PC-9 (cell line): ENCODE measurements at regions of chr5 and their contacts with region 1.

Region 1: DNA sequence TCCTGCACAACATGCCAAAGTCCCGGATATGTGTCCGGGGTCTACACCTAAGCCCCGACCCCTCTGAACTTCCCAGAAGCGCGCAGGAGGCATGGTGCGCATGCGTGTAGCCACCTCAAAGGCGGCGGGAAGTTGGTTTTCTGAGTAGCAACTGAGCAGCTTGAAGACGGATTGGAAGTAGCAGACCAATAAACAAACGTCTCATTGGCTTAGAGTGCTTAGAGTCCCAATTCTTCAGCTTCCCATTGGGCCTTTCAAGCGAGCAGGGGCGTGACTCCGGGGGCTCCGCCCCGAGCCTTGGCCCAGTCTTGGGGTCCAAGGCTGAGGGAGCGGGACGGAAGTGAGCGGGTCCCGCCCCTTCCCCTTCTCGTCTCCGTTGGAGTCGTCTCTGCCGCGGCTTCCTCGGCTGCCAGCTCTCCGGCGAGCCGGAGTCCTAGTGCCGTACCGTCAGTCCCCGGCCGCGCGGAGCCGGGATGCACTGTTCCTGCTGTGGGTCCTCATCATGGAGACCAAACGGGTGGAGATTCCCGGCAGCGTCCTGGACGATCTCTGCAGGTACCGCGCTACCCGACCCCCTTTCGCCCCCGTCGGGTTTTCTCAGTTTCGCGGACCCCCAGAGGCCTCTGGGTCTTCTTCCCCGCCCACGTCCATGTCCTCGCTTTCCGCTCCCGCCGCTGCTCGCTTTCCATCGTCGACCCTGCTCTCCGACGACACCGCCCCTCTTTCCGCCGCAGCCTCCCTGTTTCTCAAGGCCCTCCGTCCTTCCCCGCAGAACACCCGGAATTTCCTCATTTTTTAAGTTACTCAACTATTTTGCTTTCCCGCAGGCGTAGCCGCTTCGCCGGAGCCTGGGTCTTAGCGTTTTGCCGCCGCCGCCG is at the start of gene DCP2:
- DNase-seq: peak; percentile 94 to 96
- H3K4me3 ChIP-seq: peak within 1 kb of the TSS; percentile 70
- H3K27ac ChIP-seq: peak within 1 kb of the TSS; percentile 63
- H3K4me1 ChIP-seq: peaks cover 33% of the 10 kb centered on the region
- H3K27me3 ChIP-seq: no peaks in the 10 kb centered on the region
- CTCF ChIP-seq: no peak
- total RNA-seq, gene DCP2: 40.0 and 45.6 TPM in 2 replicates

Region 2: DNA sequence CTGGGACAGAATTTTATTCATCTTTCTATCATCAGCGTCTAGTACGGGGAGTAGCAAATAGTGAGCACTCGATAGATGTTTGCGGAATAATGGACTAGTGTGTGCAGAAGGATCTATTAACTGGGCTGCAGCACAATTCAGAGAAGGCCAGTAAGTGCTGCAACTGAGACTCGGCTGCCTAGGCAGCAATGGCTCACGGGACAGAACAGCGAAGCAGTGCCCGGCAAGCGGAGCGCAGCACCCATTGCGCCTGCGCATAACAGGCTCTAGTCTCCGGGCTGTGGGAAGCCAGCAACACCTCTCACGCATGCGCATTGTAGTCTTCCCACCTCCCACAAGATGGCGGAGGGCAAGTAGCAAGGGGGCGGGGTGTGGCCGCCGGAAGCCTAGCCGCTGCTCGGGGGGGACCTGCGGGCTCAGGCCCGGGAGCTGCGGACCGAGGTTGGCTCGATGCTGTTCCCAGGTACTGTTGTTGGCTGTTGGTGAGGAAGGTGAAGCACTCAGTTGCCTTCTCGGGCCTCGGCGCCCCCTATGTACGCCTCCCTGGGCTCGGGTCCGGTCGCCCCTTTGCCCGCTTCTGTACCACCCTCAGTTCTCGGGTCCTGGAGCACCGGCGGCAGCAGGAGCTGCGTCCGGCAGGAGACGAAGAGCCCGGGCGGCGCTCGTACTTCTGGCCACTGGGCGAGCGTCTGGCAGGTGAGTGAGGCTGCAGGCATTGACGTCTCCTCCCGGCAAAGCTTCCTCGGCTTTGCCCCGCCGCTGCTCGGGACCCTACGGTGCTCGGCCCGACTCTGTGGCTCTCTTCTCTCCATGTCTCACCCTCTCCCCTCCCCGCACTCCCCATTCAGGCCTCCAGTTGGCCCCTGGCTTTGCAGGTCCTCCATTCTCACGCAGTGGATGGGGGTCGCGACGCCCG is 269.2 kb before region 1 on chr5:
- CTCF ChIA-PET with region 1: no interaction called
- POLR2A ChIA-PET with region 1: no interaction called
- intact Hi-C with region 1: loop called (anchors 5 kb)
- DNase-seq: peak; percentile 91 to 95
- H3K4me3 ChIP-seq: peak overlapping the region; percentile 71
- H3K27ac ChIP-seq: peak overlapping the region; percentile 52
- H3K4me1 ChIP-seq: peaks cover 16% of the 10 kb centered on the region
- H3K27me3 ChIP-seq: no peaks in the 10 kb centered on the region
- CTCF ChIP-seq: no peak

Region 3: GRCh38 chr5:112860929-112861637 is 115.6 kb before region 1 on chr5 and contains the start of gene SRP19:
- CTCF ChIA-PET with region 1: no interaction called
- POLR2A ChIA-PET with region 1: interaction called, 5 read pairs
- intact Hi-C with region 1: loop called (anchors 5 kb)
- DNase-seq: peak; percentile 88 to 93
- H3K4me3 ChIP-seq: peak within 1 kb of the TSS; percentile 84
- H3K27ac ChIP-seq: peak within 1 kb of the TSS; percentile 69
- H3K4me1 ChIP-seq: peaks cover 20% of the 10 kb centered on the region
- H3K27me3 ChIP-seq: no peaks in the 10 kb centered on the region
- CTCF ChIP-seq: no peak
- total RNA-seq, gene SRP19: 26.8 and 34.4 TPM in 2 replicates

Region 4: DNA sequence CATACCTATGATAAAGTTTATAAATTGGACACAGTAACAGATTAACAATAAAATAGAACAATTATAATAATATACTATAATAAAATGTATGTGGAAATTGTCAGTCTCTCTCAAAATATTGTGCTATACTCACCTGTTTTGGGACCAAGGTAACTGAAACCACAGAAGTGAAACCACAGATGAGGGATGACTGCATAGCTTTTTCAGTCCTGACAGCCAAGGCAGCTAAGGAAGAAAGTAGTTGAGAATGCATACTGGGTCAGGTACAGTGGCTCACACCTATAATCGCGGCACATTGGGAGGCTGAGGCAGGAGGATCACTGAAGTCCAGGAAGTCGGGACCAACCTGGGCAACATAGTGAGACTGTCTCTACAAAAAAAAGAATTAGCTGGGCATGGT is 106.7 kb before region 1 on chr5:
- CTCF ChIA-PET with region 1: interaction called, 11 read pairs
- POLR2A ChIA-PET with region 1: no interaction called
- intact Hi-C with region 1: loop called (anchors 5 kb)
- DNase-seq: no peak
- H3K4me3 ChIP-seq: no peak overlapping the region
- H3K27ac ChIP-seq: no peak overlapping the region
- H3K4me1 ChIP-seq: no peaks in the 10 kb centered on the region
- H3K27me3 ChIP-seq: no peaks in the 10 kb centered on the region
- CTCF ChIP-seq: no peak

Region 5: GRCh38 chr5:112878760-112879159 is 97.9 kb before region 1 on chr5:
- CTCF ChIA-PET with region 1: no interaction called
- POLR2A ChIA-PET with region 1: interaction called, 11 read pairs
- intact Hi-C with region 1: loop called (anchors 5 kb)
- DNase-seq: peak; percentile 43 to 90
- H3K4me3 ChIP-seq: no peak overlapping the region; the same call in 1 of the 2 replicates
- H3K27ac ChIP-seq: peak overlapping the region; percentile 48
- H3K4me1 ChIP-seq: peaks cover 26% of the 10 kb centered on the region
- H3K27me3 ChIP-seq: no peaks in the 10 kb centered on the region
- CTCF ChIP-seq: no peak

Region 6: DNA sequence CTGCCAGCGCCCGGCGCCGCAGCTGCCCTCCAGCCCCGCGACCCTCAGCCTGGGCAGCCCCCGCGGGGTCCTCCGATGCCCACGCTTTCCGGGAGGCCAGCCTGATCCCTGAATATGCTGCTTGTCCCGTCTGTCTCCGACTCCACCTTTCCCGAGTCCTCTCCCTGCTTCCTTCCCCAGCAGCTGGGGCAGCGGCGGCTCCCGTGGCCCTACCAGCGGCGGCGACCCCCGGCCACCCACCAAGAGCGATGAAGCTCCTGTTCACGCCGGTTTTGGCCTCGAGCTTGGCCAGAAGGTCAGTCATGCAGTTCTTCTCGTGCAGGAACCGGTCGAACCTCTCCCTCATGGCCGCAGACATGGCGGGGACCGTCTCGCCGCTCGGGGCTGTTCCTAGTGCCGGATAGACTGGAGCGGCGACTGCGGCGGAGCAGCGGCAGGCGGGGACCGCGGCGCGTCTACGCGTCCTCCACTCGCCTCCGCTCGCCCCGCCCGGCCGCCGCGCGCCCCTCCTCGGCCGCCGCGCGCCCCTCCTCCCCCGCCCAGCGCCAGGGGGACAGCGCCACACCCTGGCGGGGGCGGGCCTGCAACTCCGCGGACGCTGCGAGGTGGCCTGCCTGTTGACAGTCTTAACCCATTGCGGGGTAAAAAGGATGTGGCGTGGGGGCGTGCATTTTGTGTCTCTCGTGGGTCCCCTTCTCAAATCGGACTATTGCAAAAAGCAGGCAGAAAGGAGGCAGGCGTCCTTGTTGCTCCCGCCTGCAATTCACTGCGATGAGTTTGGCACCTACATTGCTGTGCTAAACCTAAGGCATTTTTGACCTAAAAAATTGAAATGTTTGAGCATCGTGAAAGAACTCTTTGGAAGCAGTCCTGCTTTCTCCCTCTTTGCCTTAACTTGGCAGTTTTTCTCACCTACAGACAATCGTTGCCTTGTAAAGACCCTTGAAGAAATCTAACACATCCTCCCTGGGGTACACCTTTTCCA is 54.5 kb before region 1 on chr5 and contains the start of gene REEP5:
- CTCF ChIA-PET with region 1: no interaction called
- POLR2A ChIA-PET with region 1: no interaction called
- intact Hi-C with region 1: loop called (anchors 1 kb)
- DNase-seq: peak; percentile 66 to 85
- H3K4me3 ChIP-seq: peak within 1 kb of the TSS; percentile 97
- H3K27ac ChIP-seq: peak within 1 kb of the TSS; percentile 53
- H3K4me1 ChIP-seq: peaks cover 7% of the 10 kb centered on the region; the same call in 1 of the 2 replicates
- H3K27me3 ChIP-seq: no peaks in the 10 kb centered on the region
- CTCF ChIP-seq: peak; percentile 57
- total RNA-seq, gene REEP5: 45.2 and 53.6 TPM in 2 replicates

Region 7: DNA sequence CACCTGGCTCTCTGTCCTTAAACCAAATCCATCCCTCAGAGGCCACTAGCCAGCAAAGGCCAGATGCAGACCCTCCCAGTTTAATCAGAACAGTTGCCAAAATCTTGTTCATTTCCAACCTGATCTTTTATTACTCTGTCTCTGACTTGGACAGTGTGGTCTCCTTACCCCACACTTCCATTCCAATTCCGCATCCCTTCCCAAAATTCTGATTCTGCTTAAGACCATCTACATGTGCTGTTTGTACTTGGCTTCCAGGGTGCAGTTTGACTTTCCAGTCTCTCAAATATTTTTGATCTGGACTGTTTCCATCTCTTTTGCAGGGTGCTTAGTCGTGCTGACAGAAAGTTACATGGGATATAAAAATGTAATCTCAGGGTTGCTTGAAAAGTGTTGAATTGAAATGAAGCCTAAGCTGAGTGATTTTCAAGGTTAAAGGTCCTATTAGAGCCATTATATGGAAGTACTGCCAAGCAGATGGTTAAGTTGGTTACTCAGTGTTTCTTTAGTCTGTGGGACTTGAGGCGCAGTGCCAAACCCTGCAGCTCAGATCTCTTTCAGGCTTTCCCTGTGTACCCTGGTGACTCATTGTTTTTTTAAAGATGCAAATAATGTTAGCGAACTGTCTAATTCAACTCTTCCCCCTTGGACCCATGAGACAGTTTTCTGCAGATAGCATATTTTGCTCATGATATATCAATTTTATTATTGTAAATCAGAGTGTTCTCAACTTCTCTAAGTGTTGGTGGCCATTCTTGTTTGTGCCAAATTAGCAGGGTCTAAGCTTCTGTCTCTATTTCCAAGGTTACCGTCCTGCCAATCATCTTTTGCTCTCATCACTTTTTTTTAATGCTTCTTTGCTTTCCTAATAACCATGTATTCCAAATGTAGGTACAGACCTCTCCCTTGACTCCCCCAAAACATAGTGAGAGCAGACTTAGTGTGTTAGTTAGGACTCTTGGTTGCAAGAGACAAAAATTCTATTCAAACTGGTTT is 18.3 kb before region 1 on chr5:
- CTCF ChIA-PET with region 1: no interaction called
- POLR2A ChIA-PET with region 1: interaction called, 11 read pairs
- intact Hi-C with region 1: no loop called
- DNase-seq: peak; percentile 66 to 93
- H3K4me3 ChIP-seq: no peak overlapping the region
- H3K27ac ChIP-seq: peak overlapping the region; percentile 63
- H3K4me1 ChIP-seq: peaks cover 46% of the 10 kb centered on the region
- H3K27me3 ChIP-seq: no peaks in the 10 kb centered on the region
- CTCF ChIP-seq: no peak

Region 8: GRCh38 chr5:113425914-113426313 is 449.2 kb after region 1 on chr5:
- CTCF ChIA-PET with region 1: no interaction called
- POLR2A ChIA-PET with region 1: no interaction called
- intact Hi-C with region 1: no loop called
- DNase-seq: no peak
- H3K4me3 ChIP-seq: no peak overlapping the region
- H3K27ac ChIP-seq: no peak overlapping the region
- H3K4me1 ChIP-seq: no peaks in the 10 kb centered on the region
- H3K27me3 ChIP-seq: no peaks in the 10 kb centered on the region
- CTCF ChIP-seq: no peak